Gastrocnemius medialis (tissue), 4 donors: ENCODE measurements at regions of chr10 and their contacts with region 1.

Region 1: GRCh38 chr10:79116801-79117723 is 48.3 kb downstream of the ZMIZ1 start:
- DNase-seq: peak; percentile 60 to 62
- ATAC-seq: peak in 1 of 2 donors; percentile 10
- H3K4me3 ChIP-seq: no peak overlapping the region
- H3K27ac ChIP-seq: peak overlapping the region; percentile 10 to 38 (median 30)
- H3K4me1 ChIP-seq: peaks cover 59 to 65% of the 10 kb centered on the region in 2 donors
- H3K27me3 ChIP-seq: no peaks in the 10 kb centered on the region
- CTCF ChIP-seq: no peak
- POLR2A ChIP-seq: no peak

Region 2: GRCh38 chr10:79023240-79024162 is 93.6 kb before region 1 on chr10:
- in situ Hi-C with region 1: no loop called
- intact Hi-C with region 1: no loop called
- DNase-seq: peak; percentile 80 to 90
- ATAC-seq: peak; percentile 82 to 86
- H3K4me3 ChIP-seq: peak overlapping the region in 2 of 4 donors; percentile 42 to 48
- H3K27ac ChIP-seq: peak overlapping the region; percentile 89 to 91 (median 90)
- H3K4me1 ChIP-seq: peaks cover 18 to 33% of the 10 kb centered on the region in 2 donors
- H3K27me3 ChIP-seq: no peaks in the 10 kb centered on the region
- CTCF ChIP-seq: no peak
- POLR2A ChIP-seq: peak; percentile 36 to 45

Region 3: GRCh38 chr10:79038841-79039201 is 78.2 kb before region 1 on chr10:
- in situ Hi-C with region 1: no loop called
- intact Hi-C with region 1: no loop called
- DNase-seq: peak; percentile 25 to 43
- ATAC-seq: peak; percentile 88 to 91
- H3K4me3 ChIP-seq: no peak overlapping the region
- H3K27ac ChIP-seq: peak overlapping the region; percentile 43 to 71 (median 50)
- H3K4me1 ChIP-seq: peaks cover 0 to 8% of the 10 kb centered on the region in 2 donors
- H3K27me3 ChIP-seq: no peaks in the 10 kb centered on the region
- CTCF ChIP-seq: no peak
- POLR2A ChIP-seq: no peak

Region 4: GRCh38 chr10:79093658-79094411 is 23.2 kb before region 1 on chr10:
- in situ Hi-C with region 1: no loop called
- intact Hi-C with region 1: loop called (anchors 2 kb)
- DNase-seq: peak; percentile 75 to 92
- ATAC-seq: peak; percentile 86 to 92
- H3K4me3 ChIP-seq: peak overlapping the region; percentile 5 to 36 (median 17)
- H3K27ac ChIP-seq: peak overlapping the region; percentile 84 to 97 (median 90)
- H3K4me1 ChIP-seq: peaks cover 68 to 97% of the 10 kb centered on the region in 2 donors
- H3K27me3 ChIP-seq: no peaks in the 10 kb centered on the region
- CTCF ChIP-seq: no peak
- POLR2A ChIP-seq: peak; percentile 39 to 41